GM18951 (cell line): ENCODE measurements at regions of chr19 and their contacts with region 1.

Region 1: DNA sequence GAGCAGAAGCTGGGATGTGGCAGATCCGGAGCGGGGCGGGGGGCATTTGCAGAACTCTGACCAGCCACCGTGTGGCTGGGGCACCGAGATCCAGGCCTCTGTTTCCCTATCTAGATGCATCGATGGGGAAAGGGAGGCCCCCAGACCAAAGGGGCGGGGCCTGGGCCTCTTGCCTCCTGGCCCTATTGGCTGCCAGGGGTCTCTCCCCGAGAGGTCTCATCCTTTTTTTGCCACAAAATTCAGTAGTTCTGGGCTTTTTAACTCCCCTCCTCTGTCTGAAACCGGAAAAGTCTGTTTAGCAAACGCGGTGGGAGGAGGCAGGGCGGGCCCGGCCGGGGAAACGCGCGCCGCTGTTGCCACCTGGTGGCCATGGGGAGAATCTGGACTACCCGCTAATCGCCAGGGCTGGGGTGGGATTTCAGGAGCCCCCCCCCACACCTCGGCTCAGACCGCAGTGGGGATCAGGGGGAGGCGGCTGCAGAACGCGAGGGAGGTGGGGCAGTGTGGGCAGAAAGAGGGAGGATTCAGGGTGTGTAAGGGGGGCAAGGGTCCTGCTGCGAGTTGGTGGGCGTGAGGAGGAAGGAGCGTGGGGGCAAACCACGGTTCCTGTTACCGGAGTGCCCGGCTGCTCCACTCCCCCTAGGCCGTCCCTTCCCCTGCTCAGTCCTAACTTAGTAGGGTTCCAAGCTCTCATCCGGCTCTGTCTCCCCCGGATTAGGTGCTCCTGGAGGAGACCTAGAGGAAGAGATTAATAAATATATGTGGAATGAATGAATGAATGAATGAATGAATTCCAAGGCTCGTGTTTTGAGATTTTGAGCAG is 28.3 kb downstream of the IL12RB1 start:
- POLR2A ChIP-seq: no peak

Region 2: DNA sequence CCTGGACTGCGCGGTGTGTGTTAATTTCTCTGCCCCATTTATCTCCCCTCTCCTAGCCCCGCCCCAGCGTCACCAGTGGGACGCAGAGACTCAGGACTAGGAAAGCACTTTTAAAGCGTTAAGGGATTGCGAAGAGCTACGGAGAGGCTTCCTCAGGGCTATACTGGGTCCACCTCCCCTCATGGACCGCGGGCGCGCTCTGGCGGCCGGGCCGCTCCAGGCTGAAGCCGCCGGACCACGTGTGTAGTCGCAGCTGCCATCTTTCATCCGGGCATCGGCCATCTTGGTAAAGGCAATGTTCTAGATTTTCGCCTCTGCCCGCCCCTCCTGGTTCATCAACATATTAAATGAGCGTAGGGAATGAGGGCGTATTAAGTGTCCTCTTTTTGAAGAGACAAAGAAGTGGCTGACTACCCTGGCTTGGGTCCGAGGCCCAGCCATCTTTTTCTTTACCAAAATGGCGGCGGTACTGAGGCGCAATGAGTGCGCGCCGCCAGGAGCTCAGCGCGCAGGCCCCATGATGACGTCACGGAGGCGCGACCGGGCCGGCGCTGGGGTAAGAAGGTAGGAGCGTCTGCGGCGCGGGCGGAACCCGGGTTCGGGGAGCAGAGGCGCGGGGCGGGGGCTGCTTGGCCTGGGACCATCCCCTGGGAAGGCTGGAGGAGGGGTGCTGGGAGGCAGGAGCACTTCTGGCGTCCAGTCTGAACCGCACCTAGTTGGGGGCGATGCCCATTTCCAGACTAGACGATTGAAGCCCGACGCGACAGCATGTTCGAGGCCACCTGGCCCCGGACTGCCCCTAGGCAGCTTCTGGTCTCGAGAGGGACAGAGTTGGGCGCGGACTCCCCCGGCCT is 125.7 kb before region 1 on chr19 and contains the start of gene CCDC124:
- in situ Hi-C with region 1: loop called (anchors 25 kb)
- POLR2A ChIP-seq: peak; percentile 83

Region 3: GRCh38 chr19:17966550-17967256 is 91.7 kb before region 1 on chr19 and contains the start of gene KCNN1:
- in situ Hi-C with region 1: no loop called
- POLR2A ChIP-seq: no peak

Region 4: DNA sequence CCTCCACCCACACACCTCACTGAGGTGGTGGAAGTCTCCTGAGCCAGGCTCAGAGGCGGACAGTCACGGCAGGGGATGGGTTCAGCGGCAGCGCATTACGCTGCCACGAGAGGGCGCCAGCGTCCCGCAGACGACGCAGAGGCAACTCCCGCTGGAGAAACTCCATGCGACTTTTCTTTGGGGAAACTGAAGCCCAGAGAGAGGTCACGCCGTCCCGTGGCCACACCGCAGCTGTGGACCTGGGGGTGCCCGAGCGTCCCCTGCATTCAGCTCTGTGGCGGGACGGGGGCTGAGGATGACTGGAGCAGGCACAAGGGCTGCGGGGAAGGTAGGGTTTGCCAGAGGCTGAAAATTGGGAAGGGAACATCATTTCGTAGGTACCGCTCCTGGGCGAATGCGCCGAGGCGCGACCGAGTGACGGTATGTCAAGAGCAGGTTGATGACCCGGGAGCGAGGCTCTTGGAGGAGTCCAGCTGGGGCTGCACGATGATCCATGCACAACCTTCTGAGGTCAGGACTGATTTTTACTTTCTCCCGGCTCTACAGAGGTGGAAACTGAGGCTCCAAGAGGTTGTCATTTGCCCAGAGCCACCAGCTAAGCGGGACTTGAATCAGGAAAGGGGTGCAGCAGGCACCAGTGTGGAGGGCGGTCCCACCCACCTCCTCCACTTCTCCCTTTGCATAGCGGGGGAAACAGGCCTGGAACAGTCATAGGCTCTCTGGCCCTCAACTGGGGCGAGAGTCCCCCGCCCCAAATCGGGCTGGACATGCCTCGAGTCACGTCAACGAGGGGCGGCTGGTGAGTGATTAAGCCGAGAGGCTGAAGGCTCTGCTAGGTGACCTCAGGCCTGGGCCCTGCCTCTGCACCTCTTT is 51.1 kb before region 1 on chr19:
- in situ Hi-C with region 1: loop called (anchors 5 kb)
- POLR2A ChIP-seq: no peak

Region 5: GRCh38 chr19:18397242-18398202 is 339.1 kb after region 1 on chr19 and contains the start of gene LRRC25:
- in situ Hi-C with region 1: no loop called
- POLR2A ChIP-seq: no peak